HCT116 (cell line): ENCODE measurements at regions of chr6 and their contacts with region 1.

Region 1: GRCh38 chr6:32529697-32530429 is at the start of gene HLA-DRB5:
- DNase-seq: peak; percentile 1
- ATAC-seq: peak; percentile 74
- H3K4me3 ChIP-seq: no peak within 1 kb of the TSS
- H3K27ac ChIP-seq: no peak within 1 kb of the TSS
- H3K4me1 ChIP-seq: no peaks in the 10 kb centered on the region
- H3K27me3 ChIP-seq: no peaks in the 10 kb centered on the region
- CTCF ChIP-seq: no peak
- POLR2A ChIP-seq: no peak
- RAD21 ChIP-seq: no peak
- total RNA-seq, gene HLA-DRB5: not detected

Region 2: DNA sequence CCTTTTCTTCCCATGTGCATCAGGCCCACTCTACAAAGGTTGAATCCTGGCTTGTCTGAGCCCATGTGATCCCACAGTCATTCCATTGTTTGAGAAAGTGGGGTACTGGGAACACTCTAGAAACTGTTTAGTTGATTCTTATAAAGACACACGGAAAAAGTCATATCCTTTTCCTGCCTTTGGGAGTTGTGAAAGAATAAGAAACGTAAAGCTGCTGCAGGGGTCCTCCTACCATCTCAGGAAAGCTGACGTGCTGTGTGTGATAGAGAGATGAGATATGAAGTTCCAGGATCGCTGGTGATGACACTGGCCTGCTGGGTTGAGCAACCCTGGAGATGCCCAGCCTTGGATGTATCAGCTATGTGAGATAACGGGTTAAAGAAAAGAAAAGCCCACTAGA is 21.5 kb after region 1 on chr6:
- CTCF ChIA-PET with region 1: no interaction called
- POLR2A ChIA-PET with region 1: no interaction called
- RAD21 ChIA-PET with region 1: no interaction called
- intact Hi-C with region 1: no loop called
- DNase-seq: no peak
- ATAC-seq: no peak
- H3K4me3 ChIP-seq: no peak overlapping the region
- H3K27ac ChIP-seq: no peak overlapping the region
- H3K4me1 ChIP-seq: no peaks in the 10 kb centered on the region
- H3K27me3 ChIP-seq: no peaks in the 10 kb centered on the region
- CTCF ChIP-seq: no peak
- POLR2A ChIP-seq: no peak
- RAD21 ChIP-seq: no peak

Region 3: DNA sequence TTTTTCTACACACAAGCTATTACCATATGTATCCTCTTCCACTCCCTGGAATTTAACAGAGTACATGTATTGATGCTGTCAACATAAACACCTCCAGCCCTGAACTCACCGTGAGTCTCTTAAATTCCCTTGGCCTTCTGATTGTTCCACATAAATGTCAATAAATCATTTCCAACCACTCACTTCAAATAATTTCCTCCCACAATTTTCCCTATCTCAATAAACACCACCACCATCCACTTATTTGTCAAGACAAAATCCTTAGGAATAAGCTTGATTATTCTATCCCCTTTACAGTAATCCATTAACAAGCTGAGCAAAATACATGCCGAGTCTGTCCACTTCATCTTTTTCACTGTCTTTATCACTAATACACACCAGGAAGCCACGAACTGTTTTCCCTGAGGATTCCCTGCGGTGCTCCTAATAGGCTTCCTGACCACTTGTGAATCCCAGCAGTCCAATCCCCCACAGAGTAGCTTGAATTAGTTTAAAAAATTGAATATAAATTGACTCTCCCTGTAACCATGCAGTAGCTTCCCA is 40.6 kb after region 1 on chr6:
- CTCF ChIA-PET with region 1: no interaction called
- POLR2A ChIA-PET with region 1: no interaction called
- RAD21 ChIA-PET with region 1: no interaction called
- intact Hi-C with region 1: loop called (anchors 5 kb)
- DNase-seq: no peak
- ATAC-seq: no peak
- H3K4me3 ChIP-seq: no peak overlapping the region
- H3K27ac ChIP-seq: no peak overlapping the region
- H3K4me1 ChIP-seq: no peaks in the 10 kb centered on the region
- H3K27me3 ChIP-seq: no peaks in the 10 kb centered on the region
- CTCF ChIP-seq: no peak
- POLR2A ChIP-seq: no peak
- RAD21 ChIP-seq: no peak

Region 4: DNA sequence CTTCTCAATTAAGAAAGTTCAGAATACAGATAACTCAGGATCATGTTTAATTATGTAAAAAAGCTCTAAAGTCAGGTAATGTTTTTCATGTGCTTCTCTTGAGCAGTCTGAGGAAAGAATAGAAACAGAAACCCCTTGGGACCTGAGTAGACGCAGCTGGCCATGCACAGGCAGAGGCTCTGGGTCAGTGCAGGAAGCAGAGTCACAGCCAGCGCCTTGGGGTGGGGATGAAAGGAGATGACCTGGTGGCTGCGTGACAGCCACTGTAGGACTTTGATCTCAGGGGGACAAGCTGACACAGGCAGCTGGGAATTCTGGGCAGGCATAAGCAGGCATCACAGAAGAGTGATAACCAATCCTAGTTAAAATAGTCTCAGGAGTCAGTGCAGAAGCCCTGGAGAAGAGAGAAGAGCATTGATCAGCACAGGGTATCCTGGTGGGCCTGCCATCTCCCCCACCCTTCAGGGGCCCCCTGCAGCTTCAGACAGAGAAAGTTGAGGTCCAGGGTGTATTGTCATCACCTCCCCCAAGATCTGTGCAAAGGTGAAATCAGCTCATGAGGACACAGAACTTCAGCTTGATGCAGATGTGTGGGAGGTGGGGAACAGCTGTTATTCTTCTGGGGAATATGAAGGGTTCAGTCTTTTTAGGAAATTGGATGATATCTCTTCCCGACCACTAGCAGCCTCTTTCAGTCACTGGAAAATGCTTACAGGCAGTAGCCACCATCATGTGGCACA is 130.2 kb after region 1 on chr6:
- CTCF ChIA-PET with region 1: no interaction called
- POLR2A ChIA-PET with region 1: no interaction called
- RAD21 ChIA-PET with region 1: no interaction called
- intact Hi-C with region 1: no loop called
- DNase-seq: no peak
- ATAC-seq: no peak
- H3K4me3 ChIP-seq: no peak overlapping the region
- H3K27ac ChIP-seq: no peak overlapping the region
- H3K4me1 ChIP-seq: no peaks in the 10 kb centered on the region
- H3K27me3 ChIP-seq: no peaks in the 10 kb centered on the region
- CTCF ChIP-seq: no peak
- POLR2A ChIP-seq: no peak
- RAD21 ChIP-seq: no peak